ENCODE measurements at regions of chr19 and their contacts with region 1.

Region 1: GRCh38 chr19:19258589-19259338 is 14.3 kb downstream of the TM6SF2 start:
- DNase-seq: no peak
- H3K4me3 ChIP-seq: no peak overlapping the region
- H3K27ac ChIP-seq: no peak overlapping the region
- H3K4me1 ChIP-seq: peaks cover 5% of the 10 kb centered on the region
- H3K27me3 ChIP-seq: no peaks in the 10 kb centered on the region
- CTCF ChIP-seq: no peak
- POLR2A ChIP-seq: no peak

Region 2: GRCh38 chr19:19033426-19034203 is 225.1 kb before region 1 on chr19 and contains the starts of genes ARMC6 and SUGP2:
- intact Hi-C with region 1: no loop called
- DNase-seq: no peak
- H3K4me3 ChIP-seq: peak within 1 kb of the TSS; percentile 89 to 94
- H3K27ac ChIP-seq: peak within 1 kb of the TSS; percentile 93
- H3K4me1 ChIP-seq: peaks cover 42% of the 10 kb centered on the region
- H3K27me3 ChIP-seq: no peaks in the 10 kb centered on the region
- CTCF ChIP-seq: peak in 1 of 3 experiments; percentile 35
- POLR2A ChIP-seq: peak in 1 of 2 donors; percentile 73
- total RNA-seq, gene ARMC6: 26.5 TPM
- total RNA-seq, gene SUGP2: 57.9 TPM

Region 3: GRCh38 chr19:19213426-19214158 is 45.2 kb before region 1 on chr19:
- intact Hi-C with region 1: loop called (anchors 1 kb)
- DNase-seq: no peak
- H3K4me3 ChIP-seq: no peak overlapping the region
- H3K27ac ChIP-seq: no peak overlapping the region
- H3K4me1 ChIP-seq: no peaks in the 10 kb centered on the region
- H3K27me3 ChIP-seq: peaks cover 7% of the 10 kb centered on the region
- CTCF ChIP-seq: no peak
- POLR2A ChIP-seq: no peak

Measured in vagina (tissue), 2 donors.